Tibial artery (tissue), 4 donors: ENCODE measurements at regions of chr10 and their contacts with region 1.

Region 1: GRCh38 chr10:128419466-128420019 is 293.3 kb upstream of the MKI67 start:
- DNase-seq: no peak
- H3K4me3 ChIP-seq: no peak overlapping the region
- H3K27ac ChIP-seq: no peak overlapping the region
- H3K4me1 ChIP-seq: no peaks in the 10 kb centered on the region
- H3K27me3 ChIP-seq: no peaks in the 10 kb centered on the region
- CTCF ChIP-seq: no peak

Region 2: GRCh38 chr10:128095027-128095752 is 324.4 kb before region 1 on chr10:
- intact Hi-C with region 1: loop called (anchors 5 kb)
- DNase-seq: no peak
- H3K4me3 ChIP-seq: no peak overlapping the region
- H3K27ac ChIP-seq: no peak overlapping the region
- H3K4me1 ChIP-seq: no peaks in the 10 kb centered on the region
- H3K27me3 ChIP-seq: no peaks in the 10 kb centered on the region
- CTCF ChIP-seq: no peak

Region 3: GRCh38 chr10:128540781-128541761 is 121.5 kb after region 1 on chr10:
- intact Hi-C with region 1: no loop called
- DNase-seq: no peak
- H3K4me3 ChIP-seq: no peak overlapping the region
- H3K27ac ChIP-seq: no peak overlapping the region
- H3K4me1 ChIP-seq: peaks cover 0 to 6% (median 0%) of the 10 kb centered on the region in 4 donors
- H3K27me3 ChIP-seq: peaks cover 0 to 24% of the 10 kb centered on the region in 2 donors
- CTCF ChIP-seq: no peak